Naive thymus-derived CD4-positive, alpha-beta T cell (primary cell): ENCODE measurements at regions of chr3 and their contacts with region 1.

Region 1: GRCh38 chr3:111338059-111338698 is 203.8 kb upstream of the CD96 start:
- DNase-seq: peak in 5 of 9 donors; percentile 22 to 43 (median 23)
- ATAC-seq: no peak
- H3K4me3 ChIP-seq: no peak overlapping the region
- H3K4me3 Mint-ChIP-seq: no peak overlapping the region
- H3K27ac ChIP-seq: no peak overlapping the region
- H3K27ac Mint-ChIP-seq: peak overlapping the region in 2 of 9 donors; percentile 3 to 4
- H3K4me1 ChIP-seq: no peaks in the 10 kb centered on the region
- H3K4me1 Mint-ChIP-seq: peaks cover 2 to 31% (median 12%) of the 10 kb centered on the region in 7 donors
- H3K27me3 ChIP-seq: no peaks in the 10 kb centered on the region
- H3K27me3 Mint-ChIP-seq: no peaks in the 10 kb centered on the region

Region 2: GRCh38 chr3:109532257-109533216 is 1805.6 kb before region 1 on chr3:
- CTCF ChIA-PET with region 1: no interaction called
- POLR2A ChIA-PET with region 1: no interaction called
- intact Hi-C with region 1: loop called in 1 of 2 experiments (anchors 1 kb)
- DNase-seq: peak in 7 of 9 donors; percentile 3 to 39 (median 20)
- ATAC-seq: peak; percentile 67
- H3K4me3 ChIP-seq: no peak overlapping the region
- H3K4me3 Mint-ChIP-seq: no peak overlapping the region
- H3K27ac ChIP-seq: no peak overlapping the region
- H3K27ac Mint-ChIP-seq: no peak overlapping the region
- H3K4me1 ChIP-seq: no peaks in the 10 kb centered on the region
- H3K4me1 Mint-ChIP-seq: no peaks in the 10 kb centered on the region
- H3K27me3 ChIP-seq: no peaks in the 10 kb centered on the region
- H3K27me3 Mint-ChIP-seq: peaks cover 0 to 5% (median 0%) of the 10 kb centered on the region in 5 donors

Region 3: DNA sequence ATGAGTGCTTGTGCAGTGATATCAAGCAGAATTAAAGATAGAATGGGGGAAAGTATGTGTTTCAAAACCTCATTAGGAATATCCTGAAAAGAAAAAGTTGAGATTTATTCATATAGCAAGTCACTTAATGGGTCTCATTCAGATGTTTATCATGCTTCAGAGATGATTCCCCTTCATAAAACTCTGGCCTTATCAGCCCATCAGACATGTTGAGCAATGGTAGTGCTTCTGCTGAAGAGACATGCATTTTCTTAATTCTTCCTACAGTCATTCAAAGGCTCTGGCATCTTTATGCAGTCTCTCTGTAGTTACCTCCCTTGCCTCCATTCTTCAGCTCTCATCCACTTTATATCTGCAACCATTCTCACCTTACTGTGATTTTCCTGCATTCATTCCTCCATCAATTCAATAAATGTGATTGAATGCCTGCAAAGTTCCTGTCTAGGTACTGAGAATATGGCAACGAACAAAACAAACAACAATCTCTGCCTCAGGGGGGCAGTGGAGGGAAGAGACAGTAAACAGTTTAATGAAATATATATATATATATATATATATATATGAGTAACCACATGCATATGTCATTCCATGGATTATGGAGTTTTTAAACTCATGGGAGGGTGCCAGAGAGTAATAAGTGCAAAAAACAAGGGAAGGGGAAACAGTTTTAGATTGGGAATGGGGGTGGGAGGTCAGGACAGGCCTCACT is 128.0 kb before region 1 on chr3:
- CTCF ChIA-PET with region 1: no interaction called
- POLR2A ChIA-PET with region 1: no interaction called
- intact Hi-C with region 1: loop called in 1 of 2 experiments (anchors 1 kb)
- DNase-seq: no peak
- ATAC-seq: no peak
- H3K4me3 ChIP-seq: no peak overlapping the region
- H3K4me3 Mint-ChIP-seq: no peak overlapping the region
- H3K27ac ChIP-seq: no peak overlapping the region
- H3K27ac Mint-ChIP-seq: no peak overlapping the region
- H3K4me1 ChIP-seq: no peaks in the 10 kb centered on the region
- H3K4me1 Mint-ChIP-seq: no peaks in the 10 kb centered on the region
- H3K27me3 ChIP-seq: no peaks in the 10 kb centered on the region
- H3K27me3 Mint-ChIP-seq: no peaks in the 10 kb centered on the region

Region 4: GRCh38 chr3:111252779-111253178 is 85.4 kb before region 1 on chr3:
- CTCF ChIA-PET with region 1: interaction called, 3 read pairs
- POLR2A ChIA-PET with region 1: no interaction called
- intact Hi-C with region 1: loop called in 1 of 2 experiments (anchors 5 kb)
- DNase-seq: no peak
- ATAC-seq: no peak
- H3K4me3 ChIP-seq: no peak overlapping the region
- H3K4me3 Mint-ChIP-seq: no peak overlapping the region
- H3K27ac ChIP-seq: no peak overlapping the region
- H3K27ac Mint-ChIP-seq: no peak overlapping the region
- H3K4me1 ChIP-seq: no peaks in the 10 kb centered on the region
- H3K4me1 Mint-ChIP-seq: peaks cover 0 to 29% (median 5%) of the 10 kb centered on the region in 7 donors
- H3K27me3 ChIP-seq: no peaks in the 10 kb centered on the region
- H3K27me3 Mint-ChIP-seq: peaks cover 0 to 13% (median 0%) of the 10 kb centered on the region in 5 donors

Region 5: GRCh38 chr3:111277226-111277625 is 61.0 kb before region 1 on chr3:
- CTCF ChIA-PET with region 1: interaction called, 7 read pairs
- POLR2A ChIA-PET with region 1: no interaction called
- intact Hi-C with region 1: loop called (anchors 1 to 2 kb)
- DNase-seq: peak in 2 of 9 donors; percentile 4 to 23
- ATAC-seq: no peak
- H3K4me3 ChIP-seq: no peak overlapping the region
- H3K4me3 Mint-ChIP-seq: no peak overlapping the region
- H3K27ac ChIP-seq: no peak overlapping the region
- H3K27ac Mint-ChIP-seq: peak overlapping the region in 1 of 9 donors; percentile 59
- H3K4me1 ChIP-seq: no peaks in the 10 kb centered on the region
- H3K4me1 Mint-ChIP-seq: peaks cover 6 to 33% (median 24%) of the 10 kb centered on the region in 7 donors
- H3K27me3 ChIP-seq: no peaks in the 10 kb centered on the region
- H3K27me3 Mint-ChIP-seq: peaks cover 0 to 8% (median 4%) of the 10 kb centered on the region in 5 donors

Region 6: DNA sequence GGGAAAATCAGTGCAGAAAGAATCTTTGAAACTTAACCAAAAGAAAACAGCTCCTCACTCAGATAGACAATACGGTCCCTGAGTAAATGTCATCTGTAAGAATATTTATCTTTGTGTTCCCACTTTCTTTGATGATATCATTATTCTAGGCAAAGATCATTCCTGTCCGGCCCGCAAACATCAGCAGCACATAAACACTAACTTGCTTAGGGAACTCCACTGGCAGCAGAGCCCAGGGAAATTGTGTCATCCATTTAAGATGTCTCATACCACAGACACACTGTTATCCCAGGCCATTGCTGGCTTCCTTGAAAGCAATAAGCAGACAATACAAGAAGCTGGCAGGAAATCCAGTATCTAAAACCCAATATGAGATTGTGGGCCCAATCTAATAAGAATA is 183.7 kb after region 1 on chr3:
- CTCF ChIA-PET with region 1: no interaction called
- POLR2A ChIA-PET with region 1: no interaction called
- intact Hi-C with region 1: no loop called
- DNase-seq: no peak
- ATAC-seq: no peak
- H3K4me3 ChIP-seq: no peak overlapping the region
- H3K4me3 Mint-ChIP-seq: no peak overlapping the region
- H3K27ac ChIP-seq: no peak overlapping the region
- H3K27ac Mint-ChIP-seq: peak overlapping the region in 1 of 9 donors; percentile 17
- H3K4me1 ChIP-seq: no peaks in the 10 kb centered on the region
- H3K4me1 Mint-ChIP-seq: peaks cover 0 to 4% (median 0%) of the 10 kb centered on the region in 7 donors
- H3K27me3 ChIP-seq: no peaks in the 10 kb centered on the region
- H3K27me3 Mint-ChIP-seq: no peaks in the 10 kb centered on the region